ENCODE measurements at regions of chr4 and their contacts with region 1.

Region 1: DNA sequence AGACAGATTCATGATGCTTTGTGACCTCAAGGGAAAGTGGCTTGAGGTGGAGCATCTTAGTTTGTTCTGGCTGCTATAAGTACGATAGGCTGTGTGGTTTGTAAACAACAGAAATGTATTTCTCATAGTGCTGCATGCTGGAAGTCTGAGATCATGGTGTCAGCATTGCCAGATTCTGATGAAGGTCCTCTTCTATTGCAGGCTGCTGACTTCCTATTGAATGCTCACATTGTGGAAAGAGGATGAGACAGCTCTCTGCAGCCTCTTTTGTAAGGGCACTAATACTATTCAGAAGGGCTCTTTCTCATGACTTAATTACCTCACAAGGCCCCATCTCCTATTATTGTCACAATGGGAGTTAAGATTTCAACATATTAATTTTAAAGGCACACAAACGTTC is 1674.0 kb upstream of the PCDH7 start:
- DNase-seq: no peak
- ATAC-seq: no peak

Region 2: GRCh38 chr4:28966982-28967381 is 79.2 kb before region 1 on chr4:
- intact Hi-C with region 1: loop called (anchors 10 kb)
- DNase-seq: no peak
- ATAC-seq: no peak

Measured in Right ventricle myocardium inferior (tissue), 1 donor.